B cell (primary cell): ENCODE measurements at regions of chr12 and their contacts with region 1.

Region 1: DNA sequence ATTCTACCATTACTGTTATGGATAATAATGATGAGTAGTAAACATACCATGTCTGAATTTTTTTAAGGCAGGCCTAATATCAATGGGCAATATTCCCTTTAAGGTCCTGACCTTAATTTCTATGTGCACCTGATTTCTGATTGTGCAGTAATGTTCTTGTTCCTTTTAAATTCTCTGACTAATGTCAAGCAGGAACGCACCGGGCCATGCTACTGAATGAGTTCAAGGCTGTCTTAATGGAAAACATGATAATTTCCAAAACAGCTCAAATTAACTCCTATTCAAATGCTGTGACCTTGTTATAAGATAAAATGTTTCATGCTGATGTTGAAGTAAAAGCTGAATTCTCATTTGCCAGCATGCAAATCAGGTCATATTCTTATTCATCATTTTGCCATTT is 6.8 kb downstream of the TAS2R46 start:
- DNase-seq: no peak
- ATAC-seq: no peak
- H3K4me3 ChIP-seq: no peak overlapping the region
- H3K4me3 Mint-ChIP-seq: no peak overlapping the region
- H3K27ac ChIP-seq: no peak overlapping the region
- H3K27ac Mint-ChIP-seq: no peak overlapping the region
- H3K4me1 ChIP-seq: no peaks in the 10 kb centered on the region
- H3K4me1 Mint-ChIP-seq: no peaks in the 10 kb centered on the region
- H3K27me3 ChIP-seq: no peaks in the 10 kb centered on the region
- H3K27me3 Mint-ChIP-seq: no peaks in the 10 kb centered on the region
- CTCF ChIP-seq: no peak

Region 2: DNA sequence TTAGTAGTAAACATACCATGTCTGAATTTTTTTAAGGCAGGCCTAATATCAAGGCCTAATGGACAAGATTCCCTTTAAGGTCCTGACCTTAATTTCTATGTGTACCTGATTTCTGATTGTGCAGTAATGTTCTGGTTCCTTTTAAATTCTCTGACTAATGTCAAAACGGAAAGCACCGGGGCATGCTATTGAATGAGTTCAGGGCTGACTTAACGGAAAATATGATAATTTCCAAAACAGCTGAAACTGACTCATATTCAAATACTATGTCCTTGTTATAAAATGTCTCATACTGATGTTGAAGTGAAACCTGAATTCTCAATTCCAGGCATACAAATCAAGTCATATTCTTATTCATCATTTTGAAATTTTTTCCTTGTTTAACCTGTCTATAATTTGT is 30.1 kb after region 1 on chr12:
- CTCF ChIA-PET with region 1: no interaction called
- POLR2A ChIA-PET with region 1: no interaction called
- intact Hi-C with region 1: loop called (anchors 1 kb)
- DNase-seq: peak; percentile 22
- ATAC-seq: peak; percentile 45
- H3K4me3 ChIP-seq: no peak overlapping the region
- H3K4me3 Mint-ChIP-seq: no peak overlapping the region
- H3K27ac ChIP-seq: peak overlapping the region in 1 of 2 donors; percentile 4
- H3K27ac Mint-ChIP-seq: peak overlapping the region; percentile 41
- H3K4me1 ChIP-seq: peaks cover 4% of the 10 kb centered on the region in 2 donors
- H3K4me1 Mint-ChIP-seq: peaks cover 9% of the 10 kb centered on the region
- H3K27me3 ChIP-seq: no peaks in the 10 kb centered on the region
- H3K27me3 Mint-ChIP-seq: no peaks in the 10 kb centered on the region
- CTCF ChIP-seq: no peak

Region 3: GRCh38 chr12:11130999-11131398 is 75.7 kb after region 1 on chr12:
- CTCF ChIA-PET with region 1: no interaction called
- POLR2A ChIA-PET with region 1: no interaction called
- intact Hi-C with region 1: loop called (anchors 2 kb)
- DNase-seq: no peak
- ATAC-seq: no peak
- H3K4me3 ChIP-seq: no peak overlapping the region
- H3K4me3 Mint-ChIP-seq: no peak overlapping the region
- H3K27ac ChIP-seq: no peak overlapping the region
- H3K27ac Mint-ChIP-seq: no peak overlapping the region
- H3K4me1 ChIP-seq: no peaks in the 10 kb centered on the region
- H3K4me1 Mint-ChIP-seq: peaks cover 10% of the 10 kb centered on the region
- H3K27me3 ChIP-seq: no peaks in the 10 kb centered on the region
- H3K27me3 Mint-ChIP-seq: no peaks in the 10 kb centered on the region
- CTCF ChIP-seq: no peak